Activated T-helper 1 cell treated with anti-CD3 and anti-CD28 coated beads, Interleukin-12 subunit alpha, Interleukin-12 subunit beta, Interleukin-2, Interleukin-4 antibody, amounts not matched to agents 30 ng/mL and 10 ng/mL and 1 ng/mL, durations not matched to agents 14 hours and 24 hours and 36 hours (primary cell): ENCODE measurements at regions of chr12 and their contacts with region 1.

Region 1: GRCh38 chr12:7678738-7679137 is 13.0 kb upstream of the APOBEC1 start:
- DNase-seq: no peak
- H3K4me3 Mint-ChIP-seq: no peak overlapping the region
- H3K27ac Mint-ChIP-seq: no peak overlapping the region
- H3K4me1 Mint-ChIP-seq: peaks cover 13% of the 10 kb centered on the region
- H3K27me3 Mint-ChIP-seq: peaks cover 6% of the 10 kb centered on the region

Region 2: GRCh38 chr12:7354529-7354928 is 324.2 kb before region 1 on chr12:
- intact Hi-C with region 1: no loop called
- DNase-seq: no peak
- H3K4me3 Mint-ChIP-seq: no peak overlapping the region
- H3K27ac Mint-ChIP-seq: no peak overlapping the region
- H3K4me1 Mint-ChIP-seq: peaks cover 7% of the 10 kb centered on the region
- H3K27me3 Mint-ChIP-seq: peaks cover 4% of the 10 kb centered on the region

Region 3: GRCh38 chr12:7591531-7591930 is 87.2 kb before region 1 on chr12:
- intact Hi-C with region 1: no loop called
- DNase-seq: no peak
- H3K4me3 Mint-ChIP-seq: no peak overlapping the region
- H3K27ac Mint-ChIP-seq: no peak overlapping the region
- H3K4me1 Mint-ChIP-seq: no peaks in the 10 kb centered on the region
- H3K27me3 Mint-ChIP-seq: peaks cover 6% of the 10 kb centered on the region

Region 4: GRCh38 chr12:7716381-7716780 is 37.6 kb after region 1 on chr12:
- intact Hi-C with region 1: no loop called
- DNase-seq: no peak
- H3K4me3 Mint-ChIP-seq: no peak overlapping the region
- H3K27ac Mint-ChIP-seq: no peak overlapping the region
- H3K4me1 Mint-ChIP-seq: no peaks in the 10 kb centered on the region
- H3K27me3 Mint-ChIP-seq: peaks cover 5% of the 10 kb centered on the region

Region 5: GRCh38 chr12:7781283-7781682 is 102.5 kb after region 1 on chr12:
- intact Hi-C with region 1: no loop called
- DNase-seq: no peak
- H3K4me3 Mint-ChIP-seq: no peak overlapping the region
- H3K27ac Mint-ChIP-seq: no peak overlapping the region
- H3K4me1 Mint-ChIP-seq: no peaks in the 10 kb centered on the region
- H3K27me3 Mint-ChIP-seq: peaks cover 2% of the 10 kb centered on the region

Region 6: DNA sequence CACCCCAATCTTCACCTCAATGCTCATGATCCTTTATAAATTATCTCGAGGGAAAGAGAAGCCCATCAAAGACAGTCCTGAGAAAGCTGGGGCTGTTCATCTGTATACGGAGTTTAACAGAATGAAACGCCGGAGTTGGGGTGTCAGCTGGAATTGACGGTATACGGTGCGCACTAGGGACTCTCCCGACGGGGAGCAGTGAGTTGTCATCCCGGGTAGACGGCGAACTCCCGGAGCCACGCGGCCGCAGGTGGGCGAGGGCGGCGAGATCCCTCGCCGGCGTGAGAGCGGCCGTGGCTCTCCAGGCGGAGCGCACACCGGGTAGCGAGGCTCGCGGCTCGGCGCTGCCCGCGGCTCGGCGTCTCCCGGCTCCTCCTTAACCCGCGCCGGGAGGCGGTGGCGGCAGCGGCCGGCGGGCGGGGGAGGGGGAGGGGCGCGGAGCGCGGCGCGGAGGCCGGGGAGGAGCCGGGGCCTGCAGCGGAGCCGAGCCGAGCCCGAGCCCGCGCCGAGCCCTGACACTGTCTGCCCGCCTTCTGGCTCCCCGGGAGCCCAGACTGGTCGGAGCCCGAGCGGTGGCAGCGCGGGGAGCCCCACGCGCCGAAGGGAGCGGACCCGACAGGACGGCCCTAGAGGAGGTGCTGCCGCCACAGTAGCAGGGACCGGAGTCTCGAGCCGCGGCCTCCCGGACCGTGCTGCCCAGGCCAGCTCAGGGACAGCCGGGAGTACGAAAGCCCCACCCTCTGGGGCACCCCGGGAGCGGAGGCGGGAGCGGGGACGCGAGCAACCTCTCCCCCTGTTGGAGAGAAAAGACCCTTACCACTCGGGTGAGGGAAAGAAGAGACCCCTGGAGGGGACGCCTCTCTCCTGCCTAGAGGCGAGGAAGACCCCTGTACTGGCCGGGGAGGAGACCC is 353.8 kb after region 1 on chr12 and contains the start of gene FOXJ2:
- intact Hi-C with region 1: loop called (anchors 1 kb)
- DNase-seq: peak; percentile 72
- H3K4me3 Mint-ChIP-seq: peak within 1 kb of the TSS; percentile 90
- H3K27ac Mint-ChIP-seq: peak within 1 kb of the TSS; percentile 85
- H3K4me1 Mint-ChIP-seq: peaks cover 56% of the 10 kb centered on the region
- H3K27me3 Mint-ChIP-seq: no peaks in the 10 kb centered on the region
- total RNA-seq, gene FOXJ2: 19.9 and 20.7 TPM in 2 replicates